GM12878 (cell line): ENCODE measurements at regions of chr22 and their contacts with region 1.

Region 1: DNA sequence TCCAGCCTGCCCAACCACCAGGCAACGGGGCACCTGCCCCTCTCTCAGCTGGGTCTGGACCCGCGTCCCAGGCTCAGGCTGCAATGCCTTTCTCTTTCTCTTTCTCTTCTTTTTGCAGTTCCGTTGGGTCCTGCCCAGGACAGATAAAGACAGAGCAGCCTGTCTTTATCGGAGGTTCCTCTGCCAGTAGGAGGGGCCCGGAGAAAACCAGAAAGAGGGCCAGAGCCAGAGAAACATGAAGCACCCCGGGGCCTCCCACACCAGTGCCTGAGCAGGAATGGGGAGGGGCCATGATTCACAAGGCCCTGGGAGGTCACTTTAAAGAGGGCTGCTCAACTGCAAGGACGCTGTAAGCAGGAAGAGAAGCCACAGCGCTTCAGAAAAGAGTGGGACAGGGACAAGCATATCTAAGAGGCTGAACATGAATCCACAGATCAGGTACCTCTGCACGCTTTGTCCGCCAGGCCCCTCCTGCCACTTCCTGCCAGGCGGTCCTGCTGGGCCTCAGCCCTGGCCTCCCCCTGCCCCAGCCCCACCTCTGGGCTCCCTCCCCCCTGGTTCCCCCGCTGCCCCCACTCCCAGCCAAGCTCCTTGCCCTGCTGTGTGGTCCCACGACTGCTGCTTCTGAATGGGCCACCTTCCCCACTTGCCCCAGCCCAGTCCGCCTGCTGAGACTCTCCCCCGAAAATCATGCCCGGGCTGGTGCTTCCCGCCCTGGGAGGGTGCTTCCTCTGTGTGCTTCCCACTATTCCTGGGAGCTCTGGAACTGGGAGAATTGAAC is at the start of gene APOBEC3C:
- DNase-seq: peak; percentile 79
- ATAC-seq: peak; percentile 97
- H3K4me3 ChIP-seq: peak within 1 kb of the TSS; percentile 98
- H3K27ac ChIP-seq: peak within 1 kb of the TSS; percentile 94
- H3K4me1 ChIP-seq: peaks cover 6% of the 10 kb centered on the region
- H3K27me3 ChIP-seq: no peaks in the 10 kb centered on the region
- CTCF ChIP-seq: peak; percentile 7 to 46 (median 15); a peak in 3 of 6 replicates
- EP300 ChIP-seq: no peak
- POLR2A ChIP-seq: peak; percentile 79
- RAD21 ChIP-seq: peak; percentile 43
- polyA plus RNA-seq, gene APOBEC3C: 258 to 290 TPM

Region 2: DNA sequence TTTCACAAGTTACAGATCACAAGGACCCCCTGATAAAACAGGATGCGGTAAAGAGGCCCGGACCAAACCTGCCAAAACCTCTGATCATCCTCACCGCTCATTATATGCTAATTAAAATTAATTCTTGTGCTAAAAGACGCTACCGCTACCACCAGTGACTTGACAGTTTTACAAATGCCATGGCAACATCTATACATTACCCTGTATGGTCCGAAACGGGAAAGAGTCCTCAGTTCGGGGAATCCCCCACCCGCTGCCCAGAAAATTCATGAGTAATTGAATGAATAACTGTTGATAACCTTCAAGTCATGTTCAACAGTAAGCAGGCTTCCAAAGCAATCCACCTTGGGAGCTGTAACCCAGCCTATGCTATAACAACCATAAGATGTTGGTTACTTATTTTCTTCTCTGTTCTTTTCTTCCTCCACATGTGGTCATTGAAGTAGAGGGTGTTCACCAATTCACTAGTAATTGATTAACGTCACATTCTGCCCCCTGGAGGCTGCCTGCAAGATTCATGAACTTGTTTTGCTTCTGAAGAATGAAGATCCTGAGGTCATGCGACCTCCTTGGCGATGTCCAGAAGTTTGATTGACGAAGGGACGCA is 103.6 kb after region 1 on chr22:
- CTCF ChIA-PET with region 1: interaction called, 3 read pairs
- POLR2A ChIA-PET with region 1: interaction called, 7 read pairs
- RAD21 ChIA-PET with region 1: interaction called, 12 read pairs
- SMC1A ChIA-PET with region 1: interaction called, 5 read pairs
- in situ Hi-C with region 1: loop called (anchors 5 kb)
- intact Hi-C with region 1: loop called (anchors 2 kb)
- DNase-seq: peak; percentile 81
- ATAC-seq: peak; percentile 75
- H3K4me3 ChIP-seq: no peak overlapping the region
- H3K27ac ChIP-seq: peak overlapping the region; percentile 96
- H3K4me1 ChIP-seq: peaks cover 49% of the 10 kb centered on the region
- H3K27me3 ChIP-seq: no peaks in the 10 kb centered on the region
- CTCF ChIP-seq: peak; percentile 56 to 75 (median 64)
- EP300 ChIP-seq: peak; percentile 82 to 95
- POLR2A ChIP-seq: no peak
- RAD21 ChIP-seq: peak; percentile 86

Region 3: GRCh38 chr22:39197396-39197977 is 183.4 kb after region 1 on chr22:
- CTCF ChIA-PET with region 1: no interaction called
- POLR2A ChIA-PET with region 1: no interaction called
- RAD21 ChIA-PET with region 1: no interaction called
- SMC1A ChIA-PET with region 1: no interaction called
- in situ Hi-C with region 1: no loop called
- intact Hi-C with region 1: no loop called
- DNase-seq: no peak
- ATAC-seq: no peak; the same call in 2 of the 3 replicates
- H3K4me3 ChIP-seq: no peak overlapping the region
- H3K27ac ChIP-seq: no peak overlapping the region
- H3K4me1 ChIP-seq: no peaks in the 10 kb centered on the region
- H3K27me3 ChIP-seq: no peaks in the 10 kb centered on the region; a peak in 1 of 4 replicates
- CTCF ChIP-seq: no peak
- EP300 ChIP-seq: no peak
- POLR2A ChIP-seq: no peak
- RAD21 ChIP-seq: no peak